Activated CD4-positive, alpha-beta memory T cell treated with anti-CD3 and anti-CD28 coated beads, Interleukin-2, amount 10 ng/mL, durations not matched to agents 7 days and 5 days (primary cell): ENCODE measurements at regions of chr19 and their contacts with region 1.

Region 1: DNA sequence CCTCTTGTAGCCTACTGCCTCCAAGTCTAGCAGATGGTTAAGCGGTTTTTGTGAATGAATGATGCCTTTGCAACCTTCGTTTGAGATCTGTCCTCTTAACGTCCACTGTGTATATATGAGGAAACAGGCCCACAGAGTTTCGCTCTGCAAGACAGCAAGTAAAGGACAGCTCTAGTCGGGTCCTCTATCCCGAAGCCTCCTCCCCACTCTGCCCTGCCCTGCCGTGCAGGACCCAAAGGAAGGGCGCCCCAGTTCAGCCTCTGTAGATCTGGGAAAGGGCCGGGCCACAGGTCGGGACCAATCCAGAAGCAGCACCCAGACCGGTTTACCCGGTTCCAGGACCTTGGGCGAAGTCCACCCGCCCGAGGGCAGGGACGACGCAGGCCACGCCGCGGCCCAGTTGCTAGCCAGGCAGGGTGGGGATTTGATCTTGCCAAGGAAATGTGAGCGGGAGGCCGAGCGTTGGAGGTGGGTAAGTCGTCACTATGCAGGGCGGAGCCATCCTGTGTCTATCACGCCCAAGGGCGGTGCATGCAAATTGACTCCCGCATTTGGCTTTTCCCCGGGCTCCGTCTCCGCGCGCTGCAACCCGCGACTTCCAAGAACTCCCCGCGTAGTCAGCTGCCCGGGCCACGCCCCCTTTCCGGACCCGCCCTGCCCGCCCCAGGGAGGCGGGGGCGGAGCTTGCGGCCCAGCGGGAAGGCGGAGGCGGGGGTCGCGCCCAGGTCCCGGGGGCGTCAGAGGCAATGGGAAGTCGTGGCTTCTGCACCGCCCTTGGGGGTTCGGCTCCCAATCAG is 12.5 kb downstream of the IER2 start:
- DNase-seq: peak; percentile 94
- H3K4me3 Mint-ChIP-seq: peak overlapping the region; percentile 89
- H3K27ac Mint-ChIP-seq: peak overlapping the region; percentile 99
- H3K4me1 Mint-ChIP-seq: peaks cover 77% of the 10 kb centered on the region
- H3K27me3 Mint-ChIP-seq: no peaks in the 10 kb centered on the region

Region 2: DNA sequence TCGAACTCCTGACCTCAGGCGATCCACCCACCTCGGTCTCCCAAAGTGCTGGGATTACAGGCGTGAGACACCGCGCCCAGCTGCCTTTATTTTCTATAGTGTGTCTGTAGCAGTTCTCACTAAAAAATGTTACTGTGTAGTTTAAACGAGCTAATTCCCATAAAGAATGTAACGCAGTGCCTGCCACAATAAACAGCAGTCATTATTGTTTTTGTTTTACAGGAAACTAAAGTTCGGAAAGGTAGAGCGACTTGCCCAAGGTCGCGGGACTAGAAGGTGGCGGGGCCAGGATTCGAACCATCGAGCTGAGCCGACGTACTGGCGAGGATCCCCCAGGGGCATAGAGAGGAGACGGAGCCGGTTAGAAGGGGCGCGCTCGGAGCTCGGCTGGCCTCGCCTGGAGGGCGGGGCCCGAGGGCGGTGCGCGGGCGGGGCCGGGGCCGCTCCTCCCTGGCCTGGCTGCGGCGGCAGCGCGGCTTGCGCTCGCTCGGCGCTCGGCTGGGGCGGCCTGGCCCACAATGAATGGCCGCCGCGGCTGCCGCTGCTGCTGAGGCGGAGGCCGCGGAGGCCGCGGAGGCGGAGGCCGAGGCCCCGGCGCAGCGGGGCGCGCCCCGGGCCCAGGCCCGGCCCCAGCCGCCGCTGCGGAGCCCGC is 44.8 kb before region 1 on chr19 and contains the start of gene NACC1:
- CTCF ChIA-PET with region 1: interaction called, 3 read pairs
- POLR2A ChIA-PET with region 1: interaction called, 18 read pairs
- DNase-seq: peak; percentile 93
- H3K4me3 Mint-ChIP-seq: peak within 1 kb of the TSS; percentile 96
- H3K27ac Mint-ChIP-seq: peak within 1 kb of the TSS; percentile 94
- H3K4me1 Mint-ChIP-seq: peaks cover 52% of the 10 kb centered on the region
- H3K27me3 Mint-ChIP-seq: no peaks in the 10 kb centered on the region
- total RNA-seq, gene NACC1: 74.5 to 82.2 TPM

Region 3: DNA sequence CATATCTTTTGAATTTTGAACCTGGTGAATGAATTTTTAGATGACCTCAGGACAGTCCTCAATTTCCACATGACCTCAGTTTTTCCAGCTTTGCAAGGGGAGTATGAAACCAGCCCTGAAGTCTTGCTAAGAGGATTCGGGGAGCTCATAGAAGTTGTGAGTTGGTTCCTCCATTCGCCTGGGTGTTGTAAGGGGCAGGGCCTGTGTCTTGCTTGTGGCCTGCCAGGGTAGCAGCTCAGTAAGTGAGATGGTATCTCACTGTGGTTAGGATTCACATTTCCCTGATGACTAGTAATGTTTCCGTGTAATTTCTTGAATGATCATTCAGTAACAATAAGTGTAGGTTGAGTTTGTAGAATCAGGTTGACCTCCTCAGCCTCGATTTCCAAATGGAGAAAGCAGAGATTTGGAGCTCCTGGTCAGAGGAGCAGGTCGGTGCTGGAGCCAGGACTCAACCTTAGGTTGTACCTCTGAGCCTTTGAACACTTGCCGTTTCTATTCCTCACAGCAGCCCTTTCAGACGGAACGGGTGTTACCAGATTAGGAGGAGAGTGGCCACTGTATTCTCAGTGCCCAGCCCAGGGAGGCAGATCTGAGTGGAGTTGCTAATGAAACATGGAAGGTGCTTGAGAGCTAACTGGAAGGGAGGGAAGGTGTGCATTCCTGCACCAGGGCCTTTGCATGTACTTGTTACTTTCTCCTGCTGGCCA is 30.1 kb before region 1 on chr19:
- CTCF ChIA-PET with region 1: no interaction called
- POLR2A ChIA-PET with region 1: interaction called, 10 read pairs
- DNase-seq: peak; percentile 78
- H3K4me3 Mint-ChIP-seq: peak overlapping the region; percentile 61
- H3K27ac Mint-ChIP-seq: peak overlapping the region; percentile 91
- H3K4me1 Mint-ChIP-seq: peaks cover 45% of the 10 kb centered on the region
- H3K27me3 Mint-ChIP-seq: no peaks in the 10 kb centered on the region

Region 4: GRCh38 chr19:13181747-13182388 is 19.2 kb after region 1 on chr19:
- CTCF ChIA-PET with region 1: interaction called, 7 read pairs
- POLR2A ChIA-PET with region 1: interaction called, 11 read pairs
- DNase-seq: peak; percentile 20
- H3K4me3 Mint-ChIP-seq: no peak overlapping the region
- H3K27ac Mint-ChIP-seq: peak overlapping the region; percentile 34
- H3K4me1 Mint-ChIP-seq: peaks cover 21% of the 10 kb centered on the region
- H3K27me3 Mint-ChIP-seq: no peaks in the 10 kb centered on the region

Region 5: DNA sequence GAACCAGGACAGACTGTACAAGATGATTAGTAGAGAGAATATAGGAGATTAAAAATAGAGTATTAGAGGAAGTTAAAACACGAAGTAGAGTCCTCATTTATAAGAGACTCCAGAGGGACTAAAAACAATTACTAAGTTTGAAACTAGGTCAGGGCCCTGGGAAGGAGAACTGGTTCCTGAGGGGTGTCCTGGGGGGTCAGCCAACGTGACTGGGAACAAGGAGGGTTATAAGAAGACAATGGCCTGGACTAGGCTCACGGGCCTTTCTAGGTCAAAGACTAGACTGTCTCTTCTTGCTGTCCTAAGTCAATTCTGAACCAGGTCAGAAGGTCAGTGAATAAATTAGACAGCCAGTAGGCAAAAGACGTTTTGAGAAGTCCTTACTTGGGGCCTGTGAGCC is 152.8 kb after region 1 on chr19:
- CTCF ChIA-PET with region 1: no interaction called
- POLR2A ChIA-PET with region 1: no interaction called
- DNase-seq: no peak
- H3K4me3 Mint-ChIP-seq: no peak overlapping the region
- H3K27ac Mint-ChIP-seq: no peak overlapping the region
- H3K4me1 Mint-ChIP-seq: no peaks in the 10 kb centered on the region
- H3K27me3 Mint-ChIP-seq: peaks cover 13% of the 10 kb centered on the region